AG04449 (cell line): ENCODE measurements at regions of chr5 and their contacts with region 1.

Region 1: DNA sequence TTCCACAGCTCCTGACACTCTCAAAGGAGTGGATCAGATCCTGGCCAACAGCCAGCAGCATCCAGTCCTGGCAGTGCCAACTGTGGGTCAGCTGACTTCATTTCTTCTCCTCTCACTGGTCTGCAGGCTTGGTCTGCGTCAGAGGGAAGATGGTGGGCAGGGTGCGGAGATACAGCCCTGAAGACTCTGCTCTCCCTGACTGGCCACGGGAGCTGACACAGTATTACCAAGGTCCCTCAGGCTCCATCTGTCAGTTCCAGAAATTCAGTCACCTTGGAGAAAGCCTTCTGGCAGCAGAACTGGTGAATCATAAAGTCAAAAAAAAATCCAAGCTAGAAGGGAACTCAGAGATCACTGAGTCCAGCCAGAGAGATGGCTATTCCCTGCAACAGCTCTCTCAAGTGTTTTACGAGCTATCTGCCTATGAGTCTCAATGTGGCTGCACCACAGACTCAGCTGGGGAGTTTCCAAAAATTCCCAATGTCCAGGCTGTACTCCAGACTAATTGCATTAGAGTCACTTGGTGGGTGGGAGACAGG is 28.0 kb downstream of the C1QTNF2 start:
- DNase-seq: peak; percentile 12
- H3K4me3 ChIP-seq: no peak overlapping the region
- CTCF ChIP-seq: no peak

Region 2: DNA sequence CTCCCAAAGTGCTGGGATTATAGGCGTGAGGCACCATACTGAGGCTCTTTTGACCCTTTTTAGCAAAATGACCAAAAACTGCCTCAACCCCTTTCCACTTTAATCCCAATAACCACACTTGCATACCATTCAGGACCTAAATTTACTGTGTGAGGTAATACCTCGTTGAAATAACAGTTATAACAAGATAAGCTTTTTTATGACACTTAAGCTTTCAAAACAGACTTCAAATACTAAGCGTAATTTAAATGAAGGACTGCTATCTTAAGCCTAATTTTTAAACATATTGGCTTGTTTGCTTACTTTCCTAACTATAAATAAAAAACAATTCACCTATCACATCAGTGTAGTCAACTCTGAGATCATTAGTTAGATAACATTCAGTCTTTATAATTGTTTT is 261.0 kb before region 1 on chr5:
- CTCF ChIA-PET with region 1: interaction called, 26 read pairs
- POLR2A ChIA-PET with region 1: no interaction called
- DNase-seq: no peak
- H3K4me3 ChIP-seq: no peak overlapping the region
- CTCF ChIP-seq: no peak

Region 3: DNA sequence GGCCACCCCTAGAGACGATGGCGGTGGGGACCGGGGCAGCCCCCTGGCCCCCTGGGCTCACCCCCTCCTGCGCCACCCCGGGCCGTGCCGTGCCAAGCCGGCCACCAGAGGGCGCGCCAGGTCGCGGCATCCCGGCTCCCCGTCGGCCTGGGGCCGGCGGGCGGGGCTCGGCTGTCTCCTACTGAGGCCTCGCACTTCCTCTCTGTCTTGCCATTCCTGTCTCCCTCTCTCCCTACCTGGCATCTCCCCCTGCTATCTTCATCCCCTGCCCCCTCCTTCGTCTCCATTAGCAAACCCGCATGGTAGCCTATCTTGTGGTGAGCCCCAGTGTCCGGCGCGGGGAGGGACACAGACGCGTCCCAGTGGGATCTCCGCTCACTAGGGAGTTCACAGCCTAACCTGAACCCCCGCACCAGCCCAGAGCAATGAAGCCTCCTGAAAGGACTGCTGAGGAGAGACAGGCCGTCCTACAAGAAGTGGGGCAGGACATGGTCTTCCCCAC is 143.0 kb before region 1 on chr5:
- CTCF ChIA-PET with region 1: interaction called, 29 read pairs
- POLR2A ChIA-PET with region 1: no interaction called
- DNase-seq: no peak
- H3K4me3 ChIP-seq: peak overlapping the region; percentile 50
- CTCF ChIP-seq: peak; percentile 82

Region 4: DNA sequence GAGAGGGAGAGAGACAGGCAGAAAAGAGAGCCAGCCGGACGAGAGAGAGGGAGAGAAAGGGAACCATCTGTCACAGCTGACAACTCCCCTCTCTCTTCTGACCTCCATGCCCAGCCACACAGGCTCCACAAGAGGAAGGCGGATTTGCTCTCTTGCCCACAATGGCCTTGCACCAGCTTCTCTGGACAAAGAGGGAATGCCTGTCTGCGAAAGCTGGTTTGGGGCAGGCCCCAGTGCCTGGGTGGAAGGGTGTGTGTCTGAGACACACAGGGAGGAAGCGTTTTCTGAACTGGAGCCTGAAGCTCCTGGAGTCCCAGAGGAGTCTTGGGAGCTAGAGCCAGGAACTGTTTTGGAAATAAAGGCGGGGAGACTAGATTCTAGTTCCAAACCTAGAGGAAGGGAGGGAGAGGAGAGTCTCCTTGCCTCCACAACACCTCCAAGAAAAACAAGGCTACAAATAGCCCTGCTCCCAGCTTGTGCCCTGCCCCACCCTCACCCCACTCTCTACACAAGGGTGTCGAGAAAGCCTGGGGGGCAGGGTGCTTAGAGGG is 15.5 kb after region 1 on chr5:
- CTCF ChIA-PET with region 1: interaction called, 54 read pairs
- POLR2A ChIA-PET with region 1: no interaction called
- DNase-seq: no peak
- H3K4me3 ChIP-seq: no peak overlapping the region
- CTCF ChIP-seq: no peak

Region 5: DNA sequence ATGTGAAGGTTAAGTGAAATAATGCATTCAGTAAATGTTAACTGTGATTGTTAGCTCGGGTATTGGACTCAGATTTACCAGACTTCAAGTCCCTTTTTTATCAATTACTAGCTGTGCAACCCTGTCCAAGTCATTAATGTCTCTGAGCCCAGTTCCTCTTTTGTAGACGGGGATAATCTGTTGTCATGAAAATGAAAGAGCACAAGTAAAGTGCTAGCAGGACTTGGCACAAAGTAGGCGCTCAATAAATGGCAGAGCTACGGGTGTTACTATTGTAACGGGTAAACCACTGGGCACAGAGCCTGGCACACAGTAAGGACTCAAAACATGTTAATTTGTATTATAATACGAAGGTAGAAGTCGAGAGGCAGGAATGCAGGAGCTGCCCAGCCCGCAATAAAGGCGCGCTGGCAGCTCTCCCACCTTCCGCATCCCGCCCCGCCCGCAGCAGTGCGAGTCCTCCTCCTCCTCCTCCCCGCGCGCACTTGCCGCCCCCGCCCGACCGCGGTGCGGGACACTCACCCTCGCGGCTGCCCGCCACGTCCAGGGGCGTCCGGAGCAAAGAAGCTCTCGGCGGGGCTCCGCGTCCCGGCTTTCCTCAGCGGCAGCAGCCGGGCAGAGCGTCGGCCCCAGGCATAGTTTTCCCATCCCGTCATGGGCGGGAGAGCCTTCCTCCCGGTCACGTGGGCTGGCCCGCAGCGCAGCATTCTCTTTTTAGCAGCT is 27.7 kb after region 1 on chr5 and contains the start of gene C1QTNF2:
- CTCF ChIA-PET with region 1: interaction called, 12 read pairs
- POLR2A ChIA-PET with region 1: no interaction called
- DNase-seq: no peak
- H3K4me3 ChIP-seq: peak within 1 kb of the TSS; percentile 63
- CTCF ChIP-seq: no peak

Region 6: DNA sequence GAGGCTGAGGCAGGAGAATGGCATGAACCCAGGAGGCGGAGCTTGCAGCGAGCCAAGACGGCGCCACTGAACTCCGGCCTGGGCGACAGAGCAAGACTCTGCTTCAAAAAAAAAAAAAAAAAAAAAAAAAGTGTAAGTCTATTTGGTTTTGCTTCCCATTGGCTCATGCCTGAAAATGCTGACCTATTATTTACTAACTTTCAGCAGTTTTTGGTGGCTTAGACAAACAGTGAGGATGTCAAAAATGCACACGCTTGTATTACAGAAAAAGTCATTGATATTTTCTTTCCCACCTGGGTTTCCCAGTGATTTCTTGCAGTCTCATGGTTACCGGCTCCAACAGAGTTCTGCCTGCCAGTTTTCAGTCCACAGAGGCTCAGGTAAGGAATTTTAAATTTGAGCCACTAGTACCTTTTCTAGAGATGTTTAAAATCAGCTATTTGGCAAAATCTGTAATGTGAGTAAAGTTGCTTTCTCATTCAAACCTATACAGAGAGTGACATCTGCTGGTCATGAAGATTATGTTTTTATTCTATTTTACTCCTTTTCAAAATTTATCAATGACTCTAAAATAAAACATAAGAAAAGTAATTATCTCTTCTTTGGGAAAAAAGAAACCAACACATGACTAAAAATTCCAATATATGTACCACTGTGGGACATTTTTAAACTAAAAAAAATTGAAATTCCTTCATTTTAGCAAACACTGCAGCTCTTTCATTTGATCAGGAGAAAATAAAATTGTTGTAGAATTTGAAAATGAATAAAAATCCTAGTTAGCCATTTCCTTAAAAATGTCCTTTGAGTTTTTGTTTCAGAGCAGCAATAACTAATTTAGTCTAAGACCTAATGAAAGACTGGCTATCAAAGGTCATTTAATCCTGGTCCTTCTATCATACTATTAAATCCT is 48.6 kb after region 1 on chr5:
- CTCF ChIA-PET with region 1: interaction called, 14 read pairs
- POLR2A ChIA-PET with region 1: no interaction called
- DNase-seq: no peak
- H3K4me3 ChIP-seq: no peak overlapping the region
- CTCF ChIP-seq: peak; percentile 25